PC-9 (cell line): ENCODE measurements at regions of chr6 and their contacts with region 1.

Region 1: GRCh38 chr6:20564269-20564668 is 30.0 kb downstream of the CDKAL1 start:
- DNase-seq: no peak
- H3K4me3 ChIP-seq: no peak overlapping the region
- H3K27ac ChIP-seq: no peak overlapping the region
- H3K4me1 ChIP-seq: no peaks in the 10 kb centered on the region
- H3K27me3 ChIP-seq: no peaks in the 10 kb centered on the region
- CTCF ChIP-seq: peak; percentile 79

Region 2: DNA sequence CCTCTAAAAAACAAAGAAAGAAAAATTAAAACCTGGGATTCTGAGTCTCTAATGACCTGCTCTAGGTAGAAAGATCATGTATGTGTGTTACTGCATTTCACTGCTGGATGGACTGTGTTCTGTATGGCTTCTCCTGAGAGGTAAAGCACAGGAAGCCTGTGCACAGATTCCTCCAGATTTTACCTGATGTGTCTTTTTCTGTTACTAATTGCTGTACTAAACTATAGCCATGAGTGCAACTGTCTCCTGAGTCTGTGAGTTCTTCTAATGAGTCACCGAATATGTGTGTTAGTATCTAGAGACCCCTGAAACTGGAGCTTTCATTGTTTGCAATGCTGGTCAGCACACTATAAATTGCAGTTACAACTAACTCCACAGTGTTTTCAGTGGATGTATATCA is 240.8 kb after region 1 on chr6:
- CTCF ChIA-PET with region 1: no interaction called
- POLR2A ChIA-PET with region 1: no interaction called
- intact Hi-C with region 1: no loop called
- DNase-seq: no peak
- H3K4me3 ChIP-seq: no peak overlapping the region
- H3K27ac ChIP-seq: no peak overlapping the region
- H3K4me1 ChIP-seq: no peaks in the 10 kb centered on the region
- H3K27me3 ChIP-seq: no peaks in the 10 kb centered on the region
- CTCF ChIP-seq: no peak

Region 3: DNA sequence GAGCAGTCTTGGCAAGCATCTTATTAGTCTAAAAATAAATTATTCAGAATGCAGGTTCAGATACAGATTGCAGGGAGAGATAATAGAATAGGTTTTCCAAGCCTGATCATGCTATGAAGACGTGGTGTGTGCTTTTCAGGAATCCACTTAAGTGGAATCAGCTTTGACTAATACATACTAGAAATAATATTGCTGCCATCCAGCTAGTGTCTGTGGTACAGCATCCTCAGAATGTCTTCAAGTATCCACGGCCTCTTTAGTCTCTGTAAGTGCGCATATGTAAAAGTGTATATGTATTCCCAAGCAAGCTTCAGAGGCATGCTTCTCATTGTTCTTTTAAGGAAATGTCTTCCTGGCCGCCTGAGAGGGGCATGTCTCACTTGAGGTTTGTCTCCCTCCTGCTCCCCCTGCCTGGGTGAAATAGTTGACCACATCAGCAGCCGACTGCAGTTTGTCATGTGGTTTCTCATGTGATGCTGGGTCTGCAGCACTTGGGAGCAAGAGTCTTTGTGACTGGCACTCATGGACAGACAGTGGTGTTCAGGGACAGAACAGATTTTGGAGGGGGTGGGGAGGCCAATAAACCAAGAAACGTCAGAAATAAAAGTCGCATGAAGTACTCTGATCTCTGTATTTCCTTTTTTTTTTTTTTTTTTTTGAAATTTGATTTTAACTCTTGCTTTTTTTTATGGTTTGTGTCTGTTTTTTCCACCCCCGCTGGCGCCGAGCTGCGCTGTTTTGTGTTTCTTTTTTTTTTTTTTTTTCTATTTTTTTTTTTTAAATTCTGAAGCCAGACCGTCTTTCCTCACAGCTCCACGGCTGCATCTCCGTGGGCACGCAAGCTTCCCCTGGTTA is 1581.8 kb after region 1 on chr6:
- CTCF ChIA-PET with region 1: no interaction called
- POLR2A ChIA-PET with region 1: no interaction called
- intact Hi-C with region 1: loop called (anchors 2 kb)
- DNase-seq: no peak
- H3K4me3 ChIP-seq: no peak overlapping the region
- H3K27ac ChIP-seq: no peak overlapping the region
- H3K4me1 ChIP-seq: peaks cover 13% of the 10 kb centered on the region
- H3K27me3 ChIP-seq: no peaks in the 10 kb centered on the region
- CTCF ChIP-seq: no peak